H1 (cell line): ENCODE measurements at regions of chr2 and their contacts with region 1.

Region 1: GRCh38 chr2:233129351-233129987 is 69.3 kb downstream of the INPP5D start:
- DNase-seq: peak; percentile 31 to 86
- H3K4me3 ChIP-seq: no peak overlapping the region
- H3K27ac ChIP-seq: no peak overlapping the region
- H3K4me1 ChIP-seq: peaks cover 0 to 8% (median 1%) of the 10 kb centered on the region in 4 experiments
- H3K27me3 ChIP-seq: no peaks in the 10 kb centered on the region
- CTCF ChIP-seq: peak; percentile 80 to 92 (median 82)
- EP300 ChIP-seq: no peak
- POLR2A ChIP-seq: no peak
- RAD21 ChIP-seq: peak; percentile 52 to 70

Region 2: GRCh38 chr2:233092432-233093165 is 36.9 kb before region 1 on chr2:
- CTCF ChIA-PET with region 1: interaction called, 10 read pairs
- POLR2A ChIA-PET with region 1: no interaction called
- DNase-seq: no peak
- H3K4me3 ChIP-seq: no peak overlapping the region
- H3K27ac ChIP-seq: no peak overlapping the region
- H3K4me1 ChIP-seq: no peaks in the 10 kb centered on the region
- H3K27me3 ChIP-seq: no peaks in the 10 kb centered on the region; a peak in 1 of 7 replicates
- CTCF ChIP-seq: no peak
- EP300 ChIP-seq: no peak
- POLR2A ChIP-seq: no peak
- RAD21 ChIP-seq: no peak

Region 3: GRCh38 chr2:233108611-233109490 is 20.6 kb before region 1 on chr2:
- CTCF ChIA-PET with region 1: interaction called, 33 read pairs
- POLR2A ChIA-PET with region 1: interaction called, 3 read pairs
- DNase-seq: no peak
- H3K4me3 ChIP-seq: no peak overlapping the region
- H3K27ac ChIP-seq: no peak overlapping the region
- H3K4me1 ChIP-seq: no peaks in the 10 kb centered on the region
- H3K27me3 ChIP-seq: no peaks in the 10 kb centered on the region; a peak in 1 of 7 replicates
- CTCF ChIP-seq: no peak
- EP300 ChIP-seq: no peak
- POLR2A ChIP-seq: no peak
- RAD21 ChIP-seq: no peak

Region 4: GRCh38 chr2:233174137-233174536 is 44.7 kb after region 1 on chr2:
- CTCF ChIA-PET with region 1: interaction called, 16 read pairs
- POLR2A ChIA-PET with region 1: interaction called, 5 read pairs
- DNase-seq: no peak
- H3K4me3 ChIP-seq: no peak overlapping the region
- H3K27ac ChIP-seq: no peak overlapping the region
- H3K4me1 ChIP-seq: no peaks in the 10 kb centered on the region; a peak in 1 of 7 replicates
- H3K27me3 ChIP-seq: no peaks in the 10 kb centered on the region
- CTCF ChIP-seq: no peak
- EP300 ChIP-seq: no peak
- POLR2A ChIP-seq: no peak
- RAD21 ChIP-seq: no peak

Region 5: GRCh38 chr2:233280114-233280693 is 150.7 kb after region 1 on chr2:
- CTCF ChIA-PET with region 1: no interaction called
- POLR2A ChIA-PET with region 1: no interaction called
- DNase-seq: no peak
- H3K4me3 ChIP-seq: no peak overlapping the region
- H3K27ac ChIP-seq: no peak overlapping the region
- H3K4me1 ChIP-seq: no peaks in the 10 kb centered on the region
- H3K27me3 ChIP-seq: no peaks in the 10 kb centered on the region
- CTCF ChIP-seq: no peak
- EP300 ChIP-seq: no peak
- POLR2A ChIP-seq: no peak
- RAD21 ChIP-seq: no peak